Esophagus muscularis mucosa (tissue), 4 donors: ENCODE measurements at regions of chr6 and their contacts with region 1.

Region 1: DNA sequence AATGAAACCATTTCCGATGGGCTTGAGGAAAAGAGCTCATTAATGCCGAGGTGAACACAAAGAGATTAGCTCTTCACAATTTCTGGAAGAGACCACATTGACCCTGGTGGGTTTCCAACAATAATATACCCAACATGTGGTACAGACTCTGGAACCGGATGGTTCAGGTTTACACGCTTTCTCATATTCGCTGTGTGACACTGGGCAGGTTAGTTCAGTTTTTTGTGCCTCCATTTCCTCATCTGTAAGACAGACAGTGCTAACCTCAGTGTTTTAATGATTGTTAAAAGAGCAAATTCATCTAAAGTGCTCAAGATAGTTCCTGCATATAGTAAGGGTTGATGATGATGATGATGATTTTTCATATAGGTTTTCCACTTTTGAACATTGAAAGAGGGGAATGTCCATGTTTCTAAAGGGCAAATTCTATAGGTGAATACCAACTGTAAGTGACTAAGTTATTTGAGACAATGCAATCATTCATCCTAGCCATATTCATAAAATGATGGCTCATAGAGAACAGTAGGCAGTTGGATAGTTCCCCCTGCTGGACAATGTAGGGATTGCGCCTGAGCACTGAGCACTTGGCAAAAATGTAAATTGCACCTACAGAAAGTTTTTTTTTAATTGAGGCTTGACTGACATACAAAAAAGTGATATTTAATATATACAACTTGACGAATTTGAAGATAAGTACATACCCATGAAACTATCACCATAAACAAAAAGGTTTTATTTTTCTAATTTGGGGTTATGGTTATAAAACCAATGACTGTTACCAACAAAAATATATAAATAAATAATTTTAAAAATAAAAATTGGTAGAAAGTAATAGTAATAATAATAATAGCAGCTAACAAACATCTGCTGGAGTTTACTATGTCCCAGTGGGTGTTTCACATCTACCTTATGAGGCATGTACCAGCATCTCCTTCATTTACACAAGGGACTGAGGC is 2.1 kb upstream of the PERP start:
- DNase-seq: no peak
- H3K4me3 ChIP-seq: no peak overlapping the region
- H3K27ac ChIP-seq: peak overlapping the region; percentile 50 to 97 (median 90)
- H3K4me1 ChIP-seq: peaks cover 10 to 41% (median 37%) of the 10 kb centered on the region in 4 donors
- H3K27me3 ChIP-seq: peaks cover 0 to 9% (median 0%) of the 10 kb centered on the region in 4 donors
- CTCF ChIP-seq: peak; percentile 97 to 99 (median 98)
- EP300 ChIP-seq: no peak
- POLR2A ChIP-seq: no peak

Region 2: GRCh38 chr6:138001750-138002349 is 107.5 kb before region 1 on chr6:
- intact Hi-C with region 1: loop called (anchors 2 kb)
- DNase-seq: no peak
- H3K4me3 ChIP-seq: no peak overlapping the region
- H3K27ac ChIP-seq: no peak overlapping the region
- H3K4me1 ChIP-seq: peaks cover 0 to 1% (median 0%) of the 10 kb centered on the region in 4 donors
- H3K27me3 ChIP-seq: no peaks in the 10 kb centered on the region
- CTCF ChIP-seq: peak; percentile 86 to 89 (median 87)
- EP300 ChIP-seq: no peak
- POLR2A ChIP-seq: no peak